Cardiac septum (tissue), 1 donor: ENCODE measurements at regions of chr9 and their contacts with region 1.

Region 1: DNA sequence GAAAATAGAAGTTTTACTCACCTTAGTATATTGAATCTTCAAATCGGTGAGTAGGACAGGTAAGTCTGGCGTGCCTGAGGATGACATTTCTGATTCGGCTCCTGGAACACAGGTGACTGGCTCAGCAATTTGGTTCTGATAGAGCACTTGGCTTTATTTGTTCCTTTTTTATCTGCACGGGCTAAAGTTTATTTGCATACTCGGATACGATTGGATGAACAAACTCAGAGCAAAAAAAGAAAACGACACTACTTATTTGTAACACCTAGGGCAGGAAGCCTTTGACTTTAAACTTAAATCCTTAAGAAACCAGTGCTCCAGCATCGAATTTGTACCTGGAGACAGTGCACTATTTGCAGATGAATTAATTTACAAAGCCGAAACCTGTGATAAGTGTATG is at the start of gene ALDH1A1:
- DNase-seq: no peak
- total RNA-seq, gene ALDH1A1: 6.2 TPM

Region 2: GRCh38 chr9:72635197-72635596 is 317.7 kb before region 1 on chr9:
- intact Hi-C with region 1: no loop called
- DNase-seq: no peak

Region 3: DNA sequence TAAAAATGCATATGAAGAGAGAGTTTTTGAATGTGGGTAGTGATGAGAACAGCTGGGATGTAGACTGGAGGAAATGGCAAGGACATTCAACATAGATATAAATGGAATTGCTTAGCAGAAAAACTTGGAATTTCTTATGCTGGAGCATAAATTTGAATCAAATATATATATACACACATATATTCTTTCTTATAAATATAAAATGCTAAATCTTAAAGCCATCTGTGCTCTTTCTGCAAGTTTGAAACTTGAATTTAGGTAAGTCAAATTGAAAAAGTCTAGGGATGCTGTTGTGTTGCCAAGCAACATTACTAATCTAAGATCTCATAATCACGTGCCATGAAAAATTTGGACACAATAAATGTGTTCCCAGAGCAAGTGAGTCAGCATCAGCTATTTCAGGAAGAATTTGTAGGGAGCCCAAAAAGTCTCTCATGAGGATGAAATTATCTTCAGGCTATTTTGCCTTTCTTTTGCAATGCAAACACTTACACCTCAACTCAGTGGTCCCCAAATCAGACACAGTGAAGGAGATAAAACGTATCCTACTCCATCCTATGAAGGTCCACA is 58.4 kb after region 1 on chr9:
- intact Hi-C with region 1: loop called (anchors 10 kb)
- DNase-seq: no peak

Region 4: GRCh38 chr9:73667717-73668116 is 714.8 kb after region 1 on chr9:
- intact Hi-C with region 1: no loop called
- DNase-seq: no peak